ENCODE measurements at regions of chr17 and their contacts with region 1.

Region 1: GRCh38 chr17:74961657-74962490 is 10.7 kb downstream of the HID1 start:
- DNase-seq: peak; percentile 95
- H3K4me3 Mint-ChIP-seq: no peak overlapping the region
- H3K27ac Mint-ChIP-seq: no peak overlapping the region
- H3K4me1 Mint-ChIP-seq: peaks cover 8% of the 10 kb centered on the region
- H3K27me3 Mint-ChIP-seq: peaks cover 14% of the 10 kb centered on the region

Region 2: DNA sequence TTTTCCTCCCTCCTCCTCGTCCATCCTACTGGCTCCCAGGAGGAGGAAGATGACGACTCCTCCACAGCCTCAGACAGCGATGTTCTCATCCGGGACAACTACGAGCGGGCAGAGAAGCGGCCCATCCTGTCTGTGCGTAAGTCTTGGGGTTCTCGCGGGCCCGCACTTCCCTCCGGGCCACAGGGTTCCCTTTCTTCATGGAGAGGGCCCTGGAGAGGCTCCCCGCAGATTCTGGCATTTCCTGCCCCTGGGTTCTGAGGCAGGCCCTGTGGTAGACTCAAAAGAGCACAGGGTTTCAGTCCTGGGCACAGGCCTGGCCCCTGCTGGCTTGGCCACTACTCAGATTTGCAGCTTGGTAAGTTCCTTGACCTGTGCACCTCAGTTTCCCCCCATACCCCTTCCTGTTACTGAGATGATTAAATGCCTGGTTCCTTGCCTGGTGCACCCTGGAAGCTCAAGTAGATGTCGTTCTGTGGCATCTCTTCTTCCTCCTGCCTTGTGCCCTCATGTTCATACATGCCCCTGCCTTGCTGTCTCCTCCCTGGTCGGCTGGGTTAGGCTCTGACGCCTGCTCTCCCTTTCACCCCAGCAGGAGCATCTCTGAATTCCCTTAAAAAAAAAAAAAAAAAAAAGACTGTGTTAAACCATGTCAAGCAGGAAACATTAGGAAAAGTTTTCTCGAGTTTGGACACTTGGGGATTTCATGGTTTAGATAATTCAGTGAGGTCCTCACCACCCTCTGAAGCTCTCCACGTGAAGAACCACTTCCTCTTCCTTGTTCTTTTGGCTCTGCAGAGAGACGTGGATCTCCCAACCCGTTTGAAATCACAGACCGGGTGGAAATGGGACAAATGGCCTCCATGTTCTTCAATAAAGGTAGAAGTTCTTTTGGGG is 171.5 kb before region 1 on chr17:
- intact Hi-C with region 1: loop called (anchors 2 kb)
- DNase-seq: peak; percentile 62
- H3K4me3 Mint-ChIP-seq: peak overlapping the region; percentile 59
- H3K27ac Mint-ChIP-seq: peak overlapping the region; percentile 83
- H3K4me1 Mint-ChIP-seq: peaks cover 34% of the 10 kb centered on the region
- H3K27me3 Mint-ChIP-seq: no peaks in the 10 kb centered on the region

Region 3: GRCh38 chr17:74904687-74905409 is 57.0 kb before region 1 on chr17:
- intact Hi-C with region 1: no loop called
- DNase-seq: no peak
- H3K4me3 Mint-ChIP-seq: no peak overlapping the region
- H3K27ac Mint-ChIP-seq: no peak overlapping the region
- H3K4me1 Mint-ChIP-seq: no peaks in the 10 kb centered on the region
- H3K27me3 Mint-ChIP-seq: peaks cover 11% of the 10 kb centered on the region

Region 4: GRCh38 chr17:74923533-74924249 is 38.2 kb before region 1 on chr17:
- intact Hi-C with region 1: loop called (anchors 1 kb)
- DNase-seq: peak; percentile 93
- H3K4me3 Mint-ChIP-seq: no peak overlapping the region
- H3K27ac Mint-ChIP-seq: no peak overlapping the region
- H3K4me1 Mint-ChIP-seq: peaks cover 2% of the 10 kb centered on the region
- H3K27me3 Mint-ChIP-seq: peaks cover 60% of the 10 kb centered on the region

Region 5: GRCh38 chr17:74945543-74945942 is 16.3 kb before region 1 on chr17:
- intact Hi-C with region 1: no loop called
- DNase-seq: no peak
- H3K4me3 Mint-ChIP-seq: no peak overlapping the region
- H3K27ac Mint-ChIP-seq: no peak overlapping the region
- H3K4me1 Mint-ChIP-seq: no peaks in the 10 kb centered on the region
- H3K27me3 Mint-ChIP-seq: peaks cover 13% of the 10 kb centered on the region

Region 6: DNA sequence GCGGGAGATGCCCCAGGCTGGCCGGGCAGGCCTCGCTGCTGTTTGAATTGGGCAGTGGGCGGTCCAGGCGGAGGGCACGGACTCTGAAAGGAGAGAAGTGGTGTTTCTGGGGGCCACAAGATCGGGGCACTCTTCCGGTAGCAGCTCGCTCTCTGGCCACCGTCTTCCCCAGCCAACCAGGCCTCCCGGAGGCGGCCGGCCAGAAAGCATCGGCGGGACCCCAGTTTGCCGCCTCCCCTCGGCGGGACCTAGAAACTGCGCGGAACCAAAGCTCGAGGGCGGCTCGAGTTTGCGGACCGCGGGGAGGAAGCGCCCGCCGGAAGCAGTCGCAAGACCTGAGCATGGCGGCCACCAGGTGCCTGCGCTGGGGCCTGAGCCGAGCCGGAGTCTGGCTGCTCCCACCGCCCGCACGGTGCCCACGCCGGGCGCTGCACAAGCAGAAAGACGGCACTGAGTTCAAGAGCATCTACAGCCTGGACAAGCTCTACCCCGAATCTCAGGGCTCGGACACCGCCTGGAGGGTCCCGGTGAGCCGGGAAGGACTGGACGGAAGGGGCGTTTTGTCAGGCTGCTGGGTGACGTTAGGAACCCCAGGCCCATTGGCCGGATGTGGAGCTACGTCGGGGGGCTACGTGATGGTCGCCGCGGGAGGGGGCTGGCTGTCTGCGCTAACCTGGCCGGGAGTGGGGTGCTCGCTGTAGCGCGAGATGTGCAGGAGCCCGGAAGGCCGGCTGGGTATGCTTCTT is 50.6 kb after region 1 on chr17 and contains the start of gene MRPL58:
- intact Hi-C with region 1: loop called (anchors 2 kb)
- DNase-seq: peak; percentile 95
- H3K4me3 Mint-ChIP-seq: peak within 1 kb of the TSS; percentile 97
- H3K27ac Mint-ChIP-seq: peak within 1 kb of the TSS; percentile 93
- H3K4me1 Mint-ChIP-seq: peaks cover 21% of the 10 kb centered on the region
- H3K27me3 Mint-ChIP-seq: no peaks in the 10 kb centered on the region
- total RNA-seq, gene MRPL58: 73.3 and 74.3 TPM in 2 replicates

Region 7: GRCh38 chr17:75034236-75034908 is 72.5 kb after region 1 on chr17:
- intact Hi-C with region 1: loop called (anchors 2 kb)
- DNase-seq: peak; percentile 95
- H3K4me3 Mint-ChIP-seq: peak overlapping the region; percentile 98
- H3K27ac Mint-ChIP-seq: peak overlapping the region; percentile 97
- H3K4me1 Mint-ChIP-seq: peaks cover 53% of the 10 kb centered on the region
- H3K27me3 Mint-ChIP-seq: peaks cover 6% of the 10 kb centered on the region

Region 8: DNA sequence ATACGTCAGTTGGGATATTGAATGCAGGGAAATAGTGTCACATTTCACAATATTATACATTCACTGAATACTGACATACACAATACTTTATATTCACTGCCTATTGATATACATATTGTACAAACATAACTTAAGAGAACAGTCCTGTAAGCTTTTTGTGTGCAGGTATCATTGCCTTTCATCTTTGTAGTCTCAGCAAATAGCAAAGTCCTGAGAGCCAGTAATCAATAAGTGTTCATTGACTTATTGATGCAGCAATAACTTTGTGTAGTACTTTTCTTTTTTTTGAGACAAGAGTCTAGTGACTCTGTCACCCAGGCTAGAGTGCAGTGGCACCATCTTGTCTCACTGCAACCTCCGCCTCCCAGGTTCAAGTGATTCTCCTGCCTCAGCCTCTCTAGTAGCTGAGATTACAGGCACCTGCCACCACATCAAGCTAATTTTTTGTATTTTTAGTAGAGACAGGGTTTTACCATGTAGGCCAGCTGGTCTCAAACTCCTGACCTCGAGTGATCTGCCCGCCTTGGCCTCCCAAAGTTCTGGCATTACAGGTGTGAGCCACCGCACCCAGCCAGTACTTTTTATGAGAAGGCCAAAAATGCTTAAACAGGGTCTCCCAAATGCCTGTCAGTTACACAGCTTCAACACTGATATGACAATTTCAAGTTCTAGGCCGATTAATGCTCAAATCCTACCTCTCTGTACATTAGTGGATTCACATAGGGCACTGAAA is 238.2 kb after region 1 on chr17:
- intact Hi-C with region 1: loop called (anchors 5 kb)
- DNase-seq: no peak
- H3K4me3 Mint-ChIP-seq: no peak overlapping the region
- H3K27ac Mint-ChIP-seq: no peak overlapping the region
- H3K4me1 Mint-ChIP-seq: peaks cover 6% of the 10 kb centered on the region
- H3K27me3 Mint-ChIP-seq: no peaks in the 10 kb centered on the region

Measured in activated CD4-positive, alpha-beta T cell treated with anti-CD3 and anti-CD28 coated beads, Interleukin-2, amount 10 ng/mL, durations not matched to agents 24 days and 14 days (primary cell).